ENCODE measurements at regions of chr11 and their contacts with region 1.

Region 1: DNA sequence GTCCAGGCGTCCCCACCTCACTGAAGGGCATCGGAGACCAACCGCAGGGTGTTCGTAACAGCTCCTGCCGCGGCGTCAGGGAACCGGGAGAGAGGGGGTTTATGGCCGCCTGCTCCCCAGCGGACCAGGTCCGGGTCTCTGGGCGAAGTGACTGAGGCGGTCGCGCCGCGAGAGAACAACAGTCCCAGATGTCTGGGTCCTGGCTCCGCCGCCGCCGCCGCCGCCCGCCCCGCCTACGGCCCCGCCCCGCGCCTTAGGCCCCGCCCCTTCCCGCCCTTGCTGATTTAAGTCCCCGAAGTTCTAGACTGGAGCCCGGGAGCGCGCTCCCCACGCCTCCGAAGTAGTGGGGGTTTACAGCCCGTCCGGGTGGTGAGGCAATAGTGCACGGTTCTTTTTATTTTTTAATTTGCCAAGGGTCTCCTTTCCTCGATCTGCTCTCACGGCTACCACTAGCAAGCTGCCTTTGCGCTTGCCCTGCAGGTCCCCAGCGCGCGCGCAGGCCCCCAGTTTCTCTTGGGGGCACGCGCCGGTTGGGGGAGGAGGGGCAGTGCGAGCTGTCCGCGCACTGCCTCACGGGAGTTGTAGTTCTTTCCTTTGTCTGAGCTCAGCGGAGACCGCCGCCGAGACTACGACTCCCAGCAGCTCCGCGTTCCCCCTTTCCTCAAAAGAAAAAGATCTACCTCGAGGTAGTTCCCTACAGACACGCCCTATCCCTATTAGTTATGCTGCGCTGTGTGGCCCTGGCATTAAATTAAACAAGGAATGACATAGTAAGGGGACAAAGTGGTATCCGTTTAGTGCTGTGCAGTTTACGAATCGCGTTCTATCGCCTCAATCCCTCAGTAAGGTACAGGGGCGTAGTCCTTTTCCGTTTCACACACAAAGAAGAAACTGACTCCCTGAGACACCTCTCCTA is at the start of gene PGM2L1:
- DNase-seq: peak; percentile 97
- ATAC-seq: peak; percentile 89
- H3K4me3 ChIP-seq: peak within 1 kb of the TSS; percentile 85
- H3K27ac ChIP-seq: peak within 1 kb of the TSS; percentile 63
- H3K4me1 ChIP-seq: peaks cover 11% of the 10 kb centered on the region
- H3K27me3 ChIP-seq: no peaks in the 10 kb centered on the region
- CTCF ChIP-seq: no peak
- total RNA-seq, gene PGM2L1: 1.9 and 2.0 TPM in 2 replicates

Region 2: GRCh38 chr11:74418509-74418895 is 20.0 kb after region 1 on chr11:
- CTCF ChIA-PET with region 1: no interaction called
- POLR2A ChIA-PET with region 1: no interaction called
- intact Hi-C with region 1: loop called (anchors 1 kb)
- DNase-seq: peak; percentile 93
- ATAC-seq: peak; percentile 92
- H3K4me3 ChIP-seq: peak overlapping the region; percentile 19; the same call in 1 of the 2 replicates
- H3K27ac ChIP-seq: peak overlapping the region; percentile 90
- H3K4me1 ChIP-seq: peaks cover 37% of the 10 kb centered on the region
- H3K27me3 ChIP-seq: no peaks in the 10 kb centered on the region
- CTCF ChIP-seq: no peak